Activated CD4-positive, alpha-beta memory T cell treated with anti-CD3 and anti-CD28 coated beads, Interleukin-2, amount 10 ng/mL, durations not matched to agents 7 days and 5 days (primary cell): ENCODE measurements at regions of chr4 and their contacts with region 1.

Region 1: GRCh38 chr4:26330186-26330787 is 9.5 kb downstream of the RBPJ start:
- DNase-seq: no peak
- H3K4me3 Mint-ChIP-seq: no peak overlapping the region
- H3K27ac Mint-ChIP-seq: no peak overlapping the region
- H3K4me1 Mint-ChIP-seq: peaks cover 56% of the 10 kb centered on the region
- H3K27me3 Mint-ChIP-seq: no peaks in the 10 kb centered on the region

Region 2: GRCh38 chr4:26061248-26061986 is 268.9 kb before region 1 on chr4:
- CTCF ChIA-PET with region 1: interaction called, 13 read pairs
- POLR2A ChIA-PET with region 1: interaction called, 5 read pairs
- DNase-seq: peak; percentile 52
- H3K4me3 Mint-ChIP-seq: no peak overlapping the region
- H3K27ac Mint-ChIP-seq: no peak overlapping the region
- H3K4me1 Mint-ChIP-seq: peaks cover 26% of the 10 kb centered on the region
- H3K27me3 Mint-ChIP-seq: peaks cover 1% of the 10 kb centered on the region

Region 3: GRCh38 chr4:26171941-26172340 is 158.3 kb before region 1 on chr4:
- CTCF ChIA-PET with region 1: no interaction called
- POLR2A ChIA-PET with region 1: no interaction called
- DNase-seq: no peak
- H3K4me3 Mint-ChIP-seq: no peak overlapping the region
- H3K27ac Mint-ChIP-seq: no peak overlapping the region
- H3K4me1 Mint-ChIP-seq: peaks cover 19% of the 10 kb centered on the region
- H3K27me3 Mint-ChIP-seq: peaks cover 2% of the 10 kb centered on the region

Region 4: GRCh38 chr4:26342328-26343037 is 12.2 kb after region 1 on chr4:
- CTCF ChIA-PET with region 1: interaction called, 32 read pairs
- POLR2A ChIA-PET with region 1: no interaction called
- DNase-seq: no peak
- H3K4me3 Mint-ChIP-seq: no peak overlapping the region
- H3K27ac Mint-ChIP-seq: no peak overlapping the region
- H3K4me1 Mint-ChIP-seq: peaks cover 62% of the 10 kb centered on the region
- H3K27me3 Mint-ChIP-seq: no peaks in the 10 kb centered on the region

Region 5: DNA sequence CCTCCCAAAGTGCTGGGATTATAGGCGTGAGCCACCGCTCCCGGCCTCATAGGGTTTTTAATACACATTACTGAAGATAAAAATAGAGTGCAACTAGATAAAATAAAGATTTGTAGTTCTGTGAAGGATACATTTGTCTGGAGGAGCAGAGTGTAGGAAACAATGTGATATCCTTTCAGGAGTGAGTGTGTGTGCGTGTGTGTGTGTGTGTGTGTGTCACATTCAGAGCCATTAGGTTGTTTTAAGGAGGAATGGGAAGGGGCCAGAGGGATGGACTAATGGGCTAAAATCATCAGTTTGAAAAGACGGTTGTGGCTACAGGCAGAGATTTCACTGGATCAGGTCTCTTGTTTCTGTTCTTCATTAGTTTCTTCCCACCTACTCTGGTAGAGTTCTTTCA is 30.6 kb after region 1 on chr4:
- CTCF ChIA-PET with region 1: interaction called, 11 read pairs
- POLR2A ChIA-PET with region 1: no interaction called
- DNase-seq: no peak
- H3K4me3 Mint-ChIP-seq: peak overlapping the region; percentile 18
- H3K27ac Mint-ChIP-seq: peak overlapping the region; percentile 69
- H3K4me1 Mint-ChIP-seq: peaks cover 49% of the 10 kb centered on the region
- H3K27me3 Mint-ChIP-seq: no peaks in the 10 kb centered on the region

Region 6: DNA sequence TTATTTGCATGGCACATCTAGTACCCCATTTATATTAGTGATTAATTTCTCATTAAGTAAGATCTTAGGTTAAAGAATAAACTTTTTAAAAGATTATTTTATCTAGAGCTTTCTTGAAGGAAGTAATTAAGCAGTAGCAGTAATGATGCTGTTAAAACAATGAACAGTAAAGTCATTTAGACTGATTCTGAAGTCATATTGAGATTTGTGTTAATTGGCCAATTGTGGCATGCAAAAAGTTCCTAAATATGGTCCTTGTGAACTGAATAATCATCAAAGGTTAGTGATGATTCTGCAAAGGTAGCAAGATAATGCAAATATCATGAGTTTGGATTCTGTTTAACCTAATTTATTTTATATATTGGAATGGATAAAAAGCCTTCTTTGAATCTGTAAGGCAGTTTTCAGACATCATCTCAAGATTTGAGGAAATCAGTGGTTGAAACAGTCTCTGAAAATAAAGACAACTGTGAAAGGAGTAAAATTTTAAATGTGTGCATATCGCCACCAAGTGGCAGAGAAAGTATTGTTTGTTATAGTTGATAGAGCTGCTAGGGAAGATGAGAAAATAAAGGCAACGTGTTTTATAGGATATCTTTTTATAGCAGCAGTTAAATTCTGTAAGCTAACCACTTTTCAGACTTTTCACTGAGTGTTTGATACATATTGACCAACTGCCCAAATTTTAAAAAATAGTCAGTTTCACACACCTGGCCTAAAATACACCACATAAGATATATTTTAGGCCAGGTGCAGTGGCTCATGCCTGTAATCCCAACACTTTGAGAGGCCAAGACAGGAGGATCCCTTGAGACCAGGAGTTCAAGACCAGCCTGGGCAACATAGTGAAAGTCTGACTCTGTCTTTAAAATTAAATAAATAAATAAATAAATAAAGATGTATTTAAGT is 80.4 kb after region 1 on chr4:
- CTCF ChIA-PET with region 1: interaction called, 224 read pairs
- POLR2A ChIA-PET with region 1: interaction called, 4 read pairs
- DNase-seq: no peak
- H3K4me3 Mint-ChIP-seq: no peak overlapping the region
- H3K27ac Mint-ChIP-seq: no peak overlapping the region
- H3K4me1 Mint-ChIP-seq: peaks cover 13% of the 10 kb centered on the region
- H3K27me3 Mint-ChIP-seq: no peaks in the 10 kb centered on the region